BJ (cell line): ENCODE measurements at regions of chr19 and their contacts with region 1.

Region 1: DNA sequence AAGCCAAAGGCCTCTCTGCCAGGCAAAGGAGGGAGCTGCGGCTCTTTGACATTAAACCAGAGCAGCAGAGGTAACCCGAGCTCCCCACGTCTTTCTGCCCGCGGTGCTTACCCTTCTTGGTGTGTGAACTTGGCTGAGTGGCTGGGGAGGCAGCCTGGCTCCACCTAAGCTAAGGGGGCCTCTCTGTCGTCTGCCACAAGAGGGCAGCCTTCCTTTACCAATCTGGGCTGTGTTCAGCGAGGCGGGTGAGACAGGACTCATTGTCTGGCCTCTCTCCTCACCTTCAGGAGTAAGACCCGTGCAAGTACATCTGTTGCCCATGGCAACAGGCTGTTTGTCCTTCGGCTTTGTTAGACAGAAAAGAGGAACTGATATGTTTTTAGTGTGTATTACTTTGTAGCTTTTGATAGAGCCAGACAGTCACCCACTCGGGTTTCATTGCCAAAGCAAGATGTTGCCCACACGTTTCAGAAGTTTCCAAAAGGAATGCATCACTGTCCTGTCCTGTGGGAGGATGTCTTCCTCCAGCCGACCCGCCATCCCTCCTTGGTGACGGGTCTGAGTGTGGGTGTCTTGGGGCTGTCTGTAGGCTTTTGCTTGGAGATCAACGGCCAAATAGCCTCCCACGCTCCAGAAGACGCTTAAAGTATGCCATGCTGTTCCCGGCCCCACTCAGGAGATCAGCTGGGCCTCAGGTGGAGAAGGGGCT is 4.6 kb downstream of the POP4 start:
- DNase-seq: no peak
- H3K4me3 ChIP-seq: no peak overlapping the region
- H3K27me3 ChIP-seq: no peaks in the 10 kb centered on the region
- CTCF ChIP-seq: peak; percentile 93

Region 2: DNA sequence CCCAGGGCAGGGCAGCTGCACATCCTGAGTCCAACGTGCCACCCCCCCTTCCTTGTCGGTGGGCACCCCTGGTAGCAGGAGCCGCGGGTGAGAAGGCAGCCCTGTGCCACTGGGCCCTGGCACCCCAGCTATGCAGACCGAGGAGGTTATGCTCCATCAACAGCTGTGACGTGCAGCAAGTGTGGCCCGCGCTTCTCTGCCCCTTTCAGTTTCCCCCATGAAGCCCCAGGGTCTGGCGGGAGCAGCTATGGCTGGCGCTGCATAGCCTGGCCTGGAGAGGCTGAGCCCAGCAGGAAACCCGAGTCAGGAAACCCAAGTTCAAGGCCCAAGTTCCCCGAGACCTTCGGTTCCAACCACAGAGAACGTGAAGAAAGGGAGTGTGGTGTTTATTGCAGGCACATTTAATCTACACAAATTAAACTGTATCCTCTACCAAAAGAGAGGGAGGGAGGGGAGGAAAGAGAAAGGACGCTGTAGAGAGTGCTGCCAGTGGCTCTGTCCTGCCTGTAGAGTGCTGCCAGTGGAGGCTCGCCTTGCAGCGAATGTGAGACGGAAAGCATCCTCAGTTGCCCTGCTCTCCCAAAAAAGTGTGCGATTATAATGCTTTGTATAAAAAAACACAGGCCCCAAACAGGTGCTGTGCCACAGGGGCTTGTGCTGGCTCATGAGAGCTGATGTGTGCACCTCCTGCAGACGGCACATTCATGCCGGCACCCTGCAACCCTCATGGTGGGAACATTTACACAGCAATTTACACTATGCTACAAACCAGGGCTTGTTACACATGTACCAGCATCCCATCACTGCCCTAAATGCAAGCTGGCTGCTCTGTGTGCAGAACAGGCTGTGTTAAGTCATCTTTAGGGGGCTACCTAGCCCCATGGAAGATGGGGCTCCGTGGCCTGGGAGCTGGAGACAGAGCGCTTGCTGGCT is 11.7 kb after region 1 on chr19:
- CTCF ChIA-PET with region 1: interaction called, 25 read pairs
- POLR2A ChIA-PET with region 1: no interaction called
- DNase-seq: no peak
- H3K4me3 ChIP-seq: no peak overlapping the region
- H3K27me3 ChIP-seq: peaks cover 6% of the 10 kb centered on the region; the same call in 1 of the 2 replicates
- CTCF ChIP-seq: no peak

Region 3: GRCh38 chr19:29665215-29665825 is 54.6 kb after region 1 on chr19 and contains the start of gene PLEKHF1:
- CTCF ChIA-PET with region 1: interaction called, 62 read pairs
- POLR2A ChIA-PET with region 1: no interaction called
- DNase-seq: no peak
- H3K4me3 ChIP-seq: peak within 1 kb of the TSS; percentile 82
- H3K27me3 ChIP-seq: no peaks in the 10 kb centered on the region
- CTCF ChIP-seq: no peak
- polyA plus RNA-seq, gene PLEKHF1: 5.3 and 8.7 TPM in 2 replicates

Region 4: GRCh38 chr19:29680447-29680846 is 69.7 kb after region 1 on chr19:
- CTCF ChIA-PET with region 1: interaction called, 16 read pairs
- POLR2A ChIA-PET with region 1: no interaction called
- DNase-seq: no peak
- H3K4me3 ChIP-seq: no peak overlapping the region
- H3K27me3 ChIP-seq: no peaks in the 10 kb centered on the region
- CTCF ChIP-seq: no peak

Region 5: GRCh38 chr19:29694669-29695627 is 84.2 kb after region 1 on chr19:
- CTCF ChIA-PET with region 1: interaction called, 24 read pairs
- POLR2A ChIA-PET with region 1: no interaction called
- DNase-seq: no peak
- H3K4me3 ChIP-seq: no peak overlapping the region
- H3K27me3 ChIP-seq: no peaks in the 10 kb centered on the region
- CTCF ChIP-seq: peak; percentile 97

Region 6: DNA sequence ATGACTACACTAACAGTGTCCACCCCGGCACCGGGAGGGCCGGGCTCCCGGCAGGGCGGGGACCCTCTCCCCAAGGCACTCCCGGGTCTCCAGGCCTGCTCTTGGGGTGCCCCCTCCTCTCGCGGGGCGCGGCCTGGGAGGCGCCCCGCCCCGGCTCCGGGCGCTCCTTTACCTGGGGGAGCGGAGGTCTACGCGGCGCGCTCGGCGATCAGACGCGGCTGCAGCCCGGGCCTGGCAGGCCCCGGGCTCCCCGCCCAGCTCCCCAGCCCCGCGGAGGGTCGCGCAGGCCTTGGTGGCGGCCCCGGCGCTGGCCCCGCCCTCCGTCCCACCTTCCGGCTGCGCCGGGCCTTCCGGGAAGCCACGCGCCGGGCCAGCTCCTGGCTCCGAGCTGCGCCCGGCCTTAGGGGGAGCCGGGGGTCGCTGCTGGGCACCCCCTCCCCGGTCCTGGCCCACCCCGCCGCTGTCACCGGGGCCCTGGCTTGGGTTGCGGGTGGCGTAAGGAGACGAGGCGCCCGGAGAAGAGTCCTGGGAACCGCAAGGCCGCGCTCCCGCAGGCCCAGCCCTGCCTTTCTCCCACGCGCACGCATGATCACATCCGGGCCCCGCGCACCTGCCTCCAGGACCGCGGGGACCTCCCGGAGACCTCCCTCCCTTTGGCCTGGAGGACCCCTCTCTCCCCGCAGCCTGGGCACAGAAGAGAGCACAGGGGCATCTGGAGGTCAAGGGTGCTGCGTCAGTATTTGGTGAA is 104.4 kb after region 1 on chr19 and contains the start of gene C19orf12:
- CTCF ChIA-PET with region 1: interaction called, 250 read pairs
- POLR2A ChIA-PET with region 1: no interaction called
- DNase-seq: no peak
- H3K4me3 ChIP-seq: peak within 1 kb of the TSS; percentile 89
- H3K27me3 ChIP-seq: no peaks in the 10 kb centered on the region
- CTCF ChIP-seq: no peak
- polyA plus RNA-seq, gene C19orf12: 21.8 and 33.9 TPM in 2 replicates

Region 7: GRCh38 chr19:29724102-29724641 is 113.5 kb after region 1 on chr19:
- CTCF ChIA-PET with region 1: interaction called, 42 read pairs
- POLR2A ChIA-PET with region 1: interaction called, 3 read pairs
- DNase-seq: no peak
- H3K4me3 ChIP-seq: no peak overlapping the region
- H3K27me3 ChIP-seq: peaks cover 14% of the 10 kb centered on the region
- CTCF ChIP-seq: no peak